ENCODE measurements at regions of chr19 and their contacts with region 1.

Region 1: GRCh38 chr19:38647368-38647965 is at the start of gene ACTN4:
- DNase-seq: peak; percentile 100
- ATAC-seq: peak; percentile 94
- H3K4me3 ChIP-seq: peak within 1 kb of the TSS; percentile 82 to 96 (median 91)
- H3K4me3 Mint-ChIP-seq: peak within 1 kb of the TSS; percentile 90
- H3K27ac ChIP-seq: peak within 1 kb of the TSS; percentile 40 to 68
- H3K27ac Mint-ChIP-seq: peak within 1 kb of the TSS; percentile 93
- H3K4me1 ChIP-seq: peaks cover 21 to 31% of the 10 kb centered on the region in 2 donors
- H3K4me1 Mint-ChIP-seq: peaks cover 37% of the 10 kb centered on the region
- H3K27me3 ChIP-seq: no peaks in the 10 kb centered on the region
- H3K27me3 Mint-ChIP-seq: no peaks in the 10 kb centered on the region
- CTCF ChIP-seq: no peak
- total RNA-seq, gene ACTN4: 154 and 164 TPM in 2 replicates

Region 2: DNA sequence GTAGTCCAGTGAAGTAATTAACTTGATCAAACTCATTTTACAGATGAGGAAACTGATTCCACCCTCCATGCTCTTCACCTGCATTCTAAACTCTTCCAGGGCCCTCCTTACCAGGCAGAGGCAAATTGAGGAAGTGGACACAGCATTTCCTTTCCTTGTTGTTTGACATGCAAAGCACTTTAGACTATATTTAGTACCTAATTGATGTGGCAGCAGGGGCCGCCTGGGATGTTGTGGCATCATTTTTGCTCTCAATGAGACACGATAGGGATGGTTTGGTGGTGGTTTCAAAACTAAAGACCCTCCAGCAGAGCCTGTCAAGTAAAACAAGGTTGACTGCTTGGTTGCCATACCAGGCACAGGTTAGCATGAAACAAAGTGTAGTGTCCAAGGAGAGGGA is 732.6 kb before region 1 on chr19:
- CTCF ChIA-PET with region 1: no interaction called
- POLR2A ChIA-PET with region 1: no interaction called
- intact Hi-C with region 1: no loop called
- DNase-seq: peak; percentile 75
- ATAC-seq: peak; percentile 70
- H3K4me3 ChIP-seq: peak overlapping the region; percentile 16 to 43 (median 34)
- H3K4me3 Mint-ChIP-seq: peak overlapping the region; percentile 44
- H3K27ac ChIP-seq: peak overlapping the region; percentile 76 to 84
- H3K27ac Mint-ChIP-seq: peak overlapping the region; percentile 61
- H3K4me1 ChIP-seq: peaks cover 85 to 87% of the 10 kb centered on the region in 2 donors
- H3K4me1 Mint-ChIP-seq: peaks cover 71% of the 10 kb centered on the region
- H3K27me3 ChIP-seq: no peaks in the 10 kb centered on the region
- H3K27me3 Mint-ChIP-seq: no peaks in the 10 kb centered on the region
- CTCF ChIP-seq: no peak

Region 3: DNA sequence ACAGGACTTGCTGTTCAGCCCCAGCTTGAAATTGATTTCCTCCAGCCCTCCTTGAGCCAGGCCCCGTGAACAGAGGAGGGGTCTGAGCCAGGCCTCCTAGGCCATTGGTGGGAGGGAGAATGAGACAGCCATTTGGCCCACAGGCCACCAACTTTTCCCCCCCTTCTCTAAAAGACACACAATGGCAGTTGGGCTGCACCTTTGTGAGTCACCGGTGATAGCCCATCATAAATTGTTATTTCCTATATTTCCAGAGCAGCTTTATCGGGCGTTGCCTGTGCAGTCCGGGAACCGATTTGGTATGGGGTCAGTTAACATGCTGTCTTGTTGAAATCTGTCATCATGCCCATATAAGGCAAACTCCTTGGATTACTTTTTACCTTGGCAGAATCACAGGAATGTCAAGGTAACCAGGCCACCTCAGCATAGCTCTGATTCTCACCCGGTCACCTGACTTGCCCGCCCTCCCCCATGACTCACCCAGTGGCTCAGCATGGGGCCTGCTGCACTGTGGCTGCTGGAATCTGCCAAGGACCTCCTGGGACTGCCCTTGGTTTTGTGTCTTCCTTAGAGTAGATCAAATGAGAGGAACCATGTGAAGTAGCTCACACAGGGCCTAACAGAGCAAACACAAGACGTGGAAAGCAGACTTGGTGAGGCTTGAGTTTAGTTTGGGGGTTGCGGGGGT is 36.1 kb after region 1 on chr19:
- CTCF ChIA-PET with region 1: no interaction called
- POLR2A ChIA-PET with region 1: no interaction called
- intact Hi-C with region 1: loop called (anchors 5 kb)
- DNase-seq: no peak
- ATAC-seq: peak; percentile 37
- H3K4me3 ChIP-seq: no peak overlapping the region
- H3K4me3 Mint-ChIP-seq: peak overlapping the region; percentile 13
- H3K27ac ChIP-seq: peak overlapping the region in 1 of 2 donors; percentile 16
- H3K27ac Mint-ChIP-seq: peak overlapping the region; percentile 69
- H3K4me1 ChIP-seq: peaks cover 35 to 60% of the 10 kb centered on the region in 2 donors
- H3K4me1 Mint-ChIP-seq: peaks cover 74% of the 10 kb centered on the region
- H3K27me3 ChIP-seq: no peaks in the 10 kb centered on the region
- H3K27me3 Mint-ChIP-seq: no peaks in the 10 kb centered on the region
- CTCF ChIP-seq: no peak

Region 4: GRCh38 chr19:38899447-38900219 is 252.2 kb after region 1 on chr19 and contains the starts of genes NFKBIB and SIRT2:
- CTCF ChIA-PET with region 1: no interaction called
- POLR2A ChIA-PET with region 1: no interaction called
- intact Hi-C with region 1: loop called (anchors 1 kb)
- DNase-seq: peak; percentile 100
- ATAC-seq: peak; percentile 89
- H3K4me3 ChIP-seq: peak within 1 kb of the TSS; percentile 85 to 95 (median 92)
- H3K4me3 Mint-ChIP-seq: peak within 1 kb of the TSS; percentile 96
- H3K27ac ChIP-seq: peak within 1 kb of the TSS; percentile 89 to 99
- H3K27ac Mint-ChIP-seq: peak within 1 kb of the TSS; percentile 94
- H3K4me1 ChIP-seq: peaks cover 20 to 30% of the 10 kb centered on the region in 2 donors
- H3K4me1 Mint-ChIP-seq: peaks cover 38% of the 10 kb centered on the region
- H3K27me3 ChIP-seq: no peaks in the 10 kb centered on the region
- H3K27me3 Mint-ChIP-seq: no peaks in the 10 kb centered on the region
- CTCF ChIP-seq: no peak
- total RNA-seq, gene NFKBIB: 30.3 and 31.5 TPM in 2 replicates
- total RNA-seq, gene SIRT2: 41.8 and 42.4 TPM in 2 replicates

Region 5: DNA sequence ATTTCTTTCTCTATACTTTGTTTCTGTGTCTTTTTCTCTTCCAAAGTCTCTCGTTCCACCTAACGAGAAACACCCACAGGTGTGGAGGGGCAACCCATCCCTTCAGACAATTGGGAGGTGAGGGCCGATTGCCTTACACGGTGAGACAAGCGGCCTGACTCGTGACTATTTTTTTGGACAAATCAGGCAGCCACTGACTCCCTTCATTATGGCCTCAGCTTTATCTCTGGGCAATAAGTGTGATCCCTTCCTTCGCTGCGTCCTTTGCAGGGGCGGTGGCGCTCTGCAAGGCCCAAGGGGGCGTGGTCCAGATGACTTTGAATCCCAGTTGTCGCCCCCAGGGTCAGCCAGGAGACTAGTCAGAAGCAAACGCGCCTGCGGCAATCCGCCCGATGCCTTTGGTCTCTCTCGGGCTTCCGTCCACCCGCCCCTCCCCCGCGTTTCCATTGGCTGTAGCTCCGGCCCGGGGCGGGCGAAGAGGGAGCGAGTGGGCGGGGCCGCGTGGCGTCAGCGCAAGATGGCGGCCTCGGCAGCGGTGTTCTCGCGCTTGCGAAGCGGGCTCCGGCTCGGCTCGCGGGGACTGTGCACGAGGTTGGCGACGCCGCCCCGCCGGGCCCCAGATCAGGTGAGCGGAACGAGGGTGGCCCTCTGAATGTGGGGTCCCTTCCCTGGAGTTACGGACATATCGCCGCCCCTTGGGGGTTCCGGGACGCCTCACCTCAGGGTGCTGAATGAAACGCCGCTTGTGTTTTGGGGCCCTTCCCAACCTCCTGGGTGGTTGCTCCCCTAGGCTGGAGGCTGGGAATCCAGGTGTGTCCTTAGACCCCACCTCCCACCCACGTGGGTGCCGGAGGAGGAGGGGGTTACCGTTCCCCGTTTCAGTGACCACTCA is 833.1 kb after region 1 on chr19 and contains the start of gene TIMM50:
- CTCF ChIA-PET with region 1: no interaction called
- POLR2A ChIA-PET with region 1: no interaction called
- intact Hi-C with region 1: no loop called
- DNase-seq: peak; percentile 95
- ATAC-seq: peak; percentile 99
- H3K4me3 ChIP-seq: peak within 1 kb of the TSS; percentile 65 to 95 (median 89)
- H3K4me3 Mint-ChIP-seq: peak within 1 kb of the TSS; percentile 96
- H3K27ac ChIP-seq: peak within 1 kb of the TSS; percentile 67 to 84
- H3K27ac Mint-ChIP-seq: peak within 1 kb of the TSS; percentile 94
- H3K4me1 ChIP-seq: peaks cover 14 to 21% of the 10 kb centered on the region in 2 donors
- H3K4me1 Mint-ChIP-seq: peaks cover 25% of the 10 kb centered on the region
- H3K27me3 ChIP-seq: no peaks in the 10 kb centered on the region
- H3K27me3 Mint-ChIP-seq: no peaks in the 10 kb centered on the region
- CTCF ChIP-seq: no peak
- total RNA-seq, gene TIMM50: 52.3 and 55.3 TPM in 2 replicates

Measured in B cell (primary cell).